ENCODE measurements at regions of chr12 and their contacts with region 1.

Region 1: DNA sequence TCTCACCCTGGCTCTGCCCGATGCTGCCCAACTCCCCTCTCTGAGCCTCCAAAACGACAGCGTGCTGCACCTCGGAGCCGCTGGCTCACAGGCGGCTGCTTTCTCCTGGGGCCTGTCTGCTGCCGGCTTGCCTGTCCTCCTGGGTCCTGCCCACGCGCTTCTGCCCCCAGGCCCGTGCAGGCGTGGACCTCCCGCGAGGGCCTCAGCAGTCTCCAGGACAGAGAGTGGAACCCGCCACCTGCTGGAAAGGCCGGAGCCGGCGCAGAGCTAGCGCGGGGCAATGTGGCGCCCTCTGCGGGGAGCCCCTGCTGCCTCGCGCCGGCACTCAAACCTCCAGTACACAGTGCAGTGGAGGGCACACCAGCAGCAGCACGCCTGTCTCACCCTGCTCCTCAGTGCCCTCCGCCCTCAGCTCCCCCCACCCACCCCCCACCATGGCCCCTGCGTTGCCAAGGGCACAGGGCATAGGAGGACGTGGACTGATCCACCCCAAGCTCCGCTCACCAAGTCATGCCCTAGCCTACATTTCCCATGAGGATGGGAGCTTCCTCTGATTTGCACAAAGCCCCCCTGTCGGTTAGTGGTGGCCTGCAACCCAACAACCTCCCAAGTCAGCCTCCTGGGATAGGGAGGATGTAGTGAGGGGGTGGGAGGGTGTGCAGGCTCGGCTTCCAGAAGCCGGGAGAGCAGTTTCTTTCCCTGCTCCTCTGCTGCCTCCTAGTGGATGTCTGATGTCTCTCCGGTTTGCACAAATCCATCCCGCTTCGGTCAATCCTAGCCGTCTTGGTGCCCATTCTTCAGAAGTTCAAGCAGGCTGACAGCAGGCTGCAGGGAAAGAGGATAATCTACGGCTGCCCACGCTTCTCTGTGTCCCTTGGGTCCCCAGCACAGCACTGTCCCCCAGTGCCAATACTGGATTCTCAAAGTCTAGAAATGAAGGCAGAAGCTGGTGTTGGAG is 25.2 kb downstream of the KRT8 start:
- DNase-seq: peak; percentile 82 to 95
- H3K4me3 ChIP-seq: peak overlapping the region; percentile 15 to 37 (median 30)
- H3K27ac ChIP-seq: peak overlapping the region in 2 of 5 donors; percentile 50 to 59
- H3K4me1 ChIP-seq: peaks cover 17 to 34% (median 30%) of the 10 kb centered on the region in 4 donors
- H3K27me3 ChIP-seq: peaks cover 0 to 22% (median 0%) of the 10 kb centered on the region in 3 donors
- CTCF ChIP-seq: peak in 5 of 7 experiments; percentile 47 to 82 (median 64)
- EP300 ChIP-seq: no peak
- POLR2A ChIP-seq: no peak

Region 2: GRCh38 chr12:52156736-52157565 is 722.7 kb before region 1 on chr12:
- intact Hi-C with region 1: loop called (anchors 5 kb)
- DNase-seq: peak; percentile 85 to 91
- H3K4me3 ChIP-seq: no peak overlapping the region
- H3K27ac ChIP-seq: no peak overlapping the region
- H3K4me1 ChIP-seq: peaks cover 9 to 18% (median 11%) of the 10 kb centered on the region in 4 donors
- H3K27me3 ChIP-seq: peaks cover 0 to 11% (median 6%) of the 10 kb centered on the region in 3 donors
- CTCF ChIP-seq: peak in 5 of 7 experiments; percentile 86 to 93 (median 90)
- EP300 ChIP-seq: no peak
- POLR2A ChIP-seq: no peak

Region 3: GRCh38 chr12:52364901-52365489 is 514.7 kb before region 1 on chr12:
- intact Hi-C with region 1: loop called (anchors 5 kb)
- DNase-seq: no peak
- H3K4me3 ChIP-seq: no peak overlapping the region
- H3K27ac ChIP-seq: no peak overlapping the region
- H3K4me1 ChIP-seq: no peaks in the 10 kb centered on the region
- H3K27me3 ChIP-seq: peaks cover 0 to 8% (median 4%) of the 10 kb centered on the region in 3 donors
- CTCF ChIP-seq: no peak
- EP300 ChIP-seq: no peak
- POLR2A ChIP-seq: no peak

Region 4: GRCh38 chr12:52581481-52581880 is 298.2 kb before region 1 on chr12:
- intact Hi-C with region 1: no loop called
- DNase-seq: peak in 1 of 2 donors; percentile 34
- H3K4me3 ChIP-seq: no peak overlapping the region
- H3K27ac ChIP-seq: no peak overlapping the region
- H3K4me1 ChIP-seq: no peaks in the 10 kb centered on the region
- H3K27me3 ChIP-seq: no peaks in the 10 kb centered on the region
- CTCF ChIP-seq: no peak
- EP300 ChIP-seq: no peak
- POLR2A ChIP-seq: no peak

Measured in stomach (tissue), 19 donors.